Gastrocnemius medialis (tissue), 4 donors: ENCODE measurements at regions of chr16 and their contacts with region 1.

Region 1: GRCh38 chr16:57485916-57486857 is at the start of gene DOK4:
- DNase-seq: peak; percentile 43 to 53
- ATAC-seq: peak; percentile 82 to 90
- H3K4me3 ChIP-seq: peak within 1 kb of the TSS; percentile 49 to 75 (median 60)
- H3K27ac ChIP-seq: peak within 1 kb of the TSS; percentile 6 to 50 (median 40)
- H3K4me1 ChIP-seq: peaks cover 5 to 11% of the 10 kb centered on the region in 2 donors
- H3K27me3 ChIP-seq: no peaks in the 10 kb centered on the region
- CTCF ChIP-seq: no peak
- POLR2A ChIP-seq: no peak
- total RNA-seq, gene DOK4: 2.2 to 3.6 (median 2.9) TPM

Region 2: GRCh38 chr16:57535680-57536305 is 49.6 kb after region 1 on chr16:
- in situ Hi-C with region 1: no loop called
- intact Hi-C with region 1: loop called (anchors 1 kb)
- DNase-seq: peak; percentile 78 to 86
- ATAC-seq: peak; percentile 85 to 90
- H3K4me3 ChIP-seq: peak overlapping the region; percentile 73 to 94 (median 83)
- H3K27ac ChIP-seq: peak overlapping the region; percentile 65 to 83 (median 76)
- H3K4me1 ChIP-seq: peaks cover 0 to 6% of the 10 kb centered on the region in 2 donors
- H3K27me3 ChIP-seq: no peaks in the 10 kb centered on the region
- CTCF ChIP-seq: peak in 2 of 5 experiments; percentile 17 to 22
- POLR2A ChIP-seq: no peak

Region 3: GRCh38 chr16:57576429-57576870 is 90.3 kb after region 1 on chr16:
- in situ Hi-C with region 1: no loop called
- intact Hi-C with region 1: no loop called
- DNase-seq: peak in 1 of 2 donors; percentile 29
- ATAC-seq: peak; percentile 47 to 62
- H3K4me3 ChIP-seq: no peak overlapping the region
- H3K27ac ChIP-seq: no peak overlapping the region
- H3K4me1 ChIP-seq: no peaks in the 10 kb centered on the region
- H3K27me3 ChIP-seq: peaks cover 0 to 9% (median 0%) of the 10 kb centered on the region in 3 donors
- CTCF ChIP-seq: peak; percentile 38 to 88 (median 75)
- POLR2A ChIP-seq: no peak